Prostate gland (tissue), 2 donors: ENCODE measurements at regions of chr2 and their contacts with region 1.

Region 1: GRCh38 chr2:156589381-156590079 is 153.4 kb downstream of the GPD2 start:
- DNase-seq: peak; percentile 11
- H3K4me3 ChIP-seq: no peak overlapping the region
- H3K27ac ChIP-seq: no peak overlapping the region
- H3K4me1 ChIP-seq: no peaks in the 10 kb centered on the region
- H3K27me3 ChIP-seq: no peaks in the 10 kb centered on the region
- CTCF ChIP-seq: peak in 3 of 4 experiments; percentile 59 to 61 (median 60)
- POLR2A ChIP-seq: no peak

Region 2: DNA sequence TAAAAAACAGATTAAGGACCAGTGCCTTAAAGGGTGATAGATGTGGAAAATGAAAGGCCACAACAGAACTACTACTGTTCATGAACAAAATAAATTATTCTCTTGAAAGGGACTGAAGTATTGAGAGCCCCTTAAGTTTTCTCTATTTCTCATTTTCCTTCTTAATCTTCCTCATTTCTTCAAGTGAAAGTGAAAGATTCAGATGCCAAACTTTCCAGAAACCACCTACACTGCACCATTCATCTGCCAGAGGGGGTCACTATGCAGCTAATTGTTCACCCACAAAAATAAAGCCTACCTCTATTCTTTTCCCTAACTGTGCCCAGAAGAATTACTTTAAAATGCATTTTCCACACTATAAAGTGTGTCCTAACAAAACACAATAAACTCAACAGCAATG is 397.1 kb before region 1 on chr2:
- intact Hi-C with region 1: loop called (anchors 10 kb)
- DNase-seq: no peak
- H3K4me3 ChIP-seq: no peak overlapping the region
- H3K27ac ChIP-seq: no peak overlapping the region
- H3K4me1 ChIP-seq: no peaks in the 10 kb centered on the region
- H3K27me3 ChIP-seq: no peaks in the 10 kb centered on the region
- CTCF ChIP-seq: peak in 1 of 4 experiments; percentile 20
- POLR2A ChIP-seq: no peak

Region 3: DNA sequence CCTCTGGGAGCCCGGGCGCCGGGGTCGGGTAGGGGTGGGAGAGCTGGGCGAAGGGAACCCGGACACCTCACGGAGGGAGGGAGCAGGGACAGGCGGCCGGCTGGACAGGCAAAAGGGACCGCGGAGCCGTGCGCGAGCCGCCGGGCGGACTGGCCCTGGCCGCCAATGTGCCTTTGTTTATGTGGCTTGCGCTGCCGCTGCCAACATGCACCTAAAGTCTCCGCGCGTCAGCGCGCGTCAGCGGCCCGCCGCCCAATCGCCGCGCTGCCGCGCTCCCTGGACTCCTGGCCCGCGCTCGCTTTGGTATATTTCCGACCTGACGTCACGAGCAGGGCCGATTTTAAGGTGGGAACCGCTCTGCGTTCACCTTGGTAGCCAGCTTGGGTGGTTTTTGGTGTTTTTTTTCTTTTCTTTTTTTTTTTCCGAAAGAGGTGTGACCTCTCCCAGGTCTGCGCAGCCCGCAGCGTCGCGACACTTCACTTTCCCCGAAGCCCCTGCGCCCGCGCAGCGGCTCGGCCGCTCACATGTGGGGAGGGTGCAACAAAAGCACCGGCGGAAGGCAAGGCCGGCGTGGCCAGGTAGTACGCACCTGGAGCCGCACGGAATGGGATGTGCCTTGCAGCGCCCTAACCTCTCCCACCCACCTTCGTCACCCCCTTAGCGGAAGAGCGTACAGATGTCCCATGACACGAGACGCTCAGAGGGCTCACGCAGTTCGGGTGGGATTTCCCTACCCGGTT is 256.8 kb before region 1 on chr2 and contains the start of gene NR4A2:
- intact Hi-C with region 1: loop called (anchors 5 kb)
- DNase-seq: peak; percentile 93
- H3K4me3 ChIP-seq: peak within 1 kb of the TSS; percentile 84 to 88
- H3K27ac ChIP-seq: peak within 1 kb of the TSS; percentile 99
- H3K4me1 ChIP-seq: no peaks in the 10 kb centered on the region
- H3K27me3 ChIP-seq: no peaks in the 10 kb centered on the region
- CTCF ChIP-seq: peak in 2 of 4 experiments; percentile 6
- POLR2A ChIP-seq: peak; percentile 98
- total RNA-seq, gene NR4A2: 2.3 to 4.5 TPM

Region 4: GRCh38 chr2:156476850-156477206 is 112.7 kb before region 1 on chr2:
- intact Hi-C with region 1: no loop called
- DNase-seq: no peak
- H3K4me3 ChIP-seq: no peak overlapping the region
- H3K27ac ChIP-seq: peak overlapping the region in 1 of 2 donors; percentile 30
- H3K4me1 ChIP-seq: no peaks in the 10 kb centered on the region
- H3K27me3 ChIP-seq: no peaks in the 10 kb centered on the region
- CTCF ChIP-seq: no peak
- POLR2A ChIP-seq: no peak

Region 5: GRCh38 chr2:158179660-158180059 is 1590.1 kb after region 1 on chr2:
- intact Hi-C with region 1: no loop called
- DNase-seq: no peak
- H3K4me3 ChIP-seq: no peak overlapping the region
- H3K27ac ChIP-seq: no peak overlapping the region
- H3K4me1 ChIP-seq: no peaks in the 10 kb centered on the region
- H3K27me3 ChIP-seq: no peaks in the 10 kb centered on the region
- CTCF ChIP-seq: peak in 2 of 4 experiments; percentile 24 to 33
- POLR2A ChIP-seq: no peak